Caco-2 (cell line): ENCODE measurements at regions of chr10 and their contacts with region 1.

Region 1: GRCh38 chr10:49538381-49539319 is at the start of gene ERCC6:
- DNase-seq: peak; percentile 99
- H3K4me3 ChIP-seq: peak within 1 kb of the TSS; percentile 54
- H3K4me3 Mint-ChIP-seq: peak within 1 kb of the TSS; percentile 93
- H3K27ac Mint-ChIP-seq: peak within 1 kb of the TSS; percentile 96
- H3K4me1 ChIP-seq: no peaks in the 10 kb centered on the region
- H3K4me1 Mint-ChIP-seq: no peaks in the 10 kb centered on the region
- H3K27me3 ChIP-seq: no peaks in the 10 kb centered on the region
- H3K27me3 Mint-ChIP-seq: peaks cover 1% of the 10 kb centered on the region
- CTCF ChIP-seq: peak in 1 of 2 experiments; percentile 24
- total RNA-seq, gene ERCC6: 30.2 and 32.0 TPM in 2 replicates

Region 2: GRCh38 chr10:49309626-49310411 is 228.8 kb before region 1 on chr10:
- CTCF ChIA-PET with region 1: no interaction called
- POLR2A ChIA-PET with region 1: no interaction called
- intact Hi-C with region 1: no loop called
- DNase-seq: no peak
- H3K4me3 ChIP-seq: no peak overlapping the region
- H3K4me3 Mint-ChIP-seq: no peak overlapping the region
- H3K27ac Mint-ChIP-seq: no peak overlapping the region
- H3K4me1 ChIP-seq: no peaks in the 10 kb centered on the region
- H3K4me1 Mint-ChIP-seq: no peaks in the 10 kb centered on the region
- H3K27me3 ChIP-seq: no peaks in the 10 kb centered on the region; the same call in 1 of the 2 replicates
- H3K27me3 Mint-ChIP-seq: peaks cover 28% of the 10 kb centered on the region
- CTCF ChIP-seq: no peak

Region 3: DNA sequence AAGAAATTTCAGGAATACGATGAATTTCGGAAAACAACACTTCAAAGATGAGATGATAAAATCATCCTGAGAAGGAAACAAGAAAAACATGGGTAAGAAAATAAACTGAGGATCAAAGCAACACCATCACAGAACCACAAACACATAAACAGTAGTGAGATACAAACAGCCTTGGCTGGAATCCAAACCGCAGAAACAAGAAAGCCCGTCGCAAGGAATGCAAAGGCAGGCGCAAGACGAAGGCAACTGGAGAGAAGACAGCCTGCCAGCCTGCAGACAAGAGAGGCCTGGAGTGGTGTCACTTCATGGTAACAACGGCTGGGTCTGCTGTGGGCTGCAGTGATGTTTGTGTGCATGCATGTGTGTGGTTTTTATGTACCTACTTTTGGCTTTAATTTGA is 81.0 kb before region 1 on chr10:
- CTCF ChIA-PET with region 1: no interaction called
- POLR2A ChIA-PET with region 1: no interaction called
- intact Hi-C with region 1: no loop called
- DNase-seq: no peak
- H3K4me3 ChIP-seq: no peak overlapping the region
- H3K4me3 Mint-ChIP-seq: no peak overlapping the region
- H3K27ac Mint-ChIP-seq: no peak overlapping the region
- H3K4me1 ChIP-seq: no peaks in the 10 kb centered on the region
- H3K4me1 Mint-ChIP-seq: no peaks in the 10 kb centered on the region
- H3K27me3 ChIP-seq: no peaks in the 10 kb centered on the region
- H3K27me3 Mint-ChIP-seq: no peaks in the 10 kb centered on the region
- CTCF ChIP-seq: no peak

Region 4: GRCh38 chr10:49526619-49527018 is 12.0 kb before region 1 on chr10:
- CTCF ChIA-PET with region 1: interaction called, 8 read pairs
- POLR2A ChIA-PET with region 1: interaction called, 11 read pairs
- intact Hi-C with region 1: no loop called
- DNase-seq: no peak
- H3K4me3 ChIP-seq: no peak overlapping the region
- H3K4me3 Mint-ChIP-seq: no peak overlapping the region
- H3K27ac Mint-ChIP-seq: no peak overlapping the region
- H3K4me1 ChIP-seq: no peaks in the 10 kb centered on the region
- H3K4me1 Mint-ChIP-seq: no peaks in the 10 kb centered on the region
- H3K27me3 ChIP-seq: no peaks in the 10 kb centered on the region
- H3K27me3 Mint-ChIP-seq: no peaks in the 10 kb centered on the region
- CTCF ChIP-seq: no peak

Region 5: GRCh38 chr10:49552249-49552672 is 13.6 kb after region 1 on chr10:
- CTCF ChIA-PET with region 1: interaction called, 11 read pairs
- POLR2A ChIA-PET with region 1: interaction called, 5 read pairs
- intact Hi-C with region 1: no loop called
- DNase-seq: peak; percentile 56 to 68
- H3K4me3 ChIP-seq: no peak overlapping the region
- H3K4me3 Mint-ChIP-seq: peak overlapping the region; percentile 3
- H3K27ac Mint-ChIP-seq: peak overlapping the region; percentile 47
- H3K4me1 ChIP-seq: peaks cover 45% of the 10 kb centered on the region
- H3K4me1 Mint-ChIP-seq: peaks cover 25% of the 10 kb centered on the region
- H3K27me3 ChIP-seq: no peaks in the 10 kb centered on the region
- H3K27me3 Mint-ChIP-seq: no peaks in the 10 kb centered on the region
- CTCF ChIP-seq: no peak

Region 6: DNA sequence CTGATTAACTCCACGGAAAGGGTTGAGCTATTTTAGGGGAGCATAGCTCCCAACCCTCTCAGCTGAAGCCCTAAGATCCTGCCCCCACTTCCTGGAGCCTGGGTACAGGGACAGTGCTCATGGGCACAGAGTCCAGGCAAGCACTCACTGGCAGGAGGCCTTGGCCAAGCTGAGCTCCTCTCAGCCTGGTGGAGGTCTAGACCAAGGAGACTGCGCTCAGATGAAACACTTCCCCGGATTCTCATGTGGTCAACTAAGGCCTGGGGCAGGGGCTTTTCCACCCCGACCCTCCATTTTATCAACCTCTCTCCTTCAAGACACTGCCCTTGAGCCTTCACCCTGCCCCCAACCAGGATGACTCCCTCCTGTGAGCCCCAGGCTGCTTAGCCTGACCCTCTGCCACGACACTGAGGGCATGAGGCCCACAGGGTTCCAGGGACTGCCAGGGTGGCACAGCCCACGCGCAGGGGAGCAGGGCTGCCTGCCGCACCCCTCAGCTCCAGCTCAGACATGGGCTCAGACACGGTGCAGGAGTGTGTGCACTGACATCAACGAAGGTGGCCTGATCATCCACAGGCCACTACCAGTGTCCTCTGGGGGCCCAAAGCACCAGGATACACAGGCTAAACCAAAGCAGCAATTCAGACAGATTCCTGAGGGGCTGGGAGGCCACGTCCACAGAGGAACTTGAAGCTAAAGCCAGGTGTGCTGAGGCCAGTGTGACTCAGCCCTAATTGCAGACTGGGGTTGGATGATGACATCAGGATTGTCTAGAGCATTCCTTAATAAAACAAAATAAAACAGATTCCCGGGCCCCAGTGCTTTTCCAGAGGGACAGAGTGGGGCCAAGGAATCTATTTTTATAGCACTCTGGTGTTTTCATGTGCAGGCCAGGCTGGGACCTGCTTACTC is 94.0 kb after region 1 on chr10:
- CTCF ChIA-PET with region 1: no interaction called
- POLR2A ChIA-PET with region 1: no interaction called
- intact Hi-C with region 1: no loop called
- DNase-seq: peak; percentile 24 to 30
- H3K4me3 ChIP-seq: no peak overlapping the region
- H3K4me3 Mint-ChIP-seq: no peak overlapping the region
- H3K27ac Mint-ChIP-seq: no peak overlapping the region
- H3K4me1 ChIP-seq: no peaks in the 10 kb centered on the region
- H3K4me1 Mint-ChIP-seq: no peaks in the 10 kb centered on the region
- H3K27me3 ChIP-seq: peaks cover 1% of the 10 kb centered on the region
- H3K27me3 Mint-ChIP-seq: peaks cover 9% of the 10 kb centered on the region
- CTCF ChIP-seq: no peak

Region 7: DNA sequence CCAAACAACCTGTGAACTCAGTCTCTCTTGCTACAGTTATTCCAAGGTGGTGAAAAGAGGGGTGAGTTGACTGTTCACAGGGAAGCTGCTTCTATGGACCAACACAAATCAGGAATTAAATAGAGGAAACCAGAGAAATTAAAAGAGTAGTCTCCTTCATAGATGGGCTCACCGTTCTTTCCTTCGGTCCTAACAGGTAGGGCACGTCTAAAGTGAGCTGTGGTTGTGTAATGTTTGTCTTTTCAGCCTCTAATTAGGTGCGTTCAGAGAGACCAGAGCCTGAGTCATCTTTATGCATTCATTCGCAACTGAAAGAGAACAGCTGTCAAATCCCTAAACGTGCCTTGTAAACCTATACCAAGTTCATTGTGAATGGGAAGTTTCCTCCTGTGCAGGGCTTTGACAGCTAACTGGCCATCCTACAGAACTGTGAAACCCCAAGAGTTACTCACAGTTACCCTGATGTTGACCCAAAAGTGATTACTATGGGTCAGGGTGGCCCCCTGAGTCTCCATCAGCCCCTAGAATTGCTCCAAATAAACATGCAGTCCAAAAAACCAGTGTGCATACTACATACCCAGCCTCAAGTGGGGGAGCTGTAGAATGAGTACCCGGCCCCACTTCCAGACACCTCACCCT is 122.7 kb after region 1 on chr10:
- CTCF ChIA-PET with region 1: no interaction called
- POLR2A ChIA-PET with region 1: no interaction called
- intact Hi-C with region 1: no loop called
- DNase-seq: no peak
- H3K4me3 ChIP-seq: no peak overlapping the region
- H3K4me3 Mint-ChIP-seq: no peak overlapping the region
- H3K27ac Mint-ChIP-seq: no peak overlapping the region
- H3K4me1 ChIP-seq: no peaks in the 10 kb centered on the region
- H3K4me1 Mint-ChIP-seq: no peaks in the 10 kb centered on the region
- H3K27me3 ChIP-seq: no peaks in the 10 kb centered on the region
- H3K27me3 Mint-ChIP-seq: peaks cover 7% of the 10 kb centered on the region
- CTCF ChIP-seq: no peak